ENCODE measurements at regions of chr7 and their contacts with region 1.

Region 1: GRCh38 chr7:135169141-135169960 is 1.2 kb downstream of the CYREN start:
- DNase-seq: peak in 2 of 4 donors; percentile 38 to 39
- ATAC-seq: no peak
- H3K4me3 ChIP-seq: peak overlapping the region in 1 of 2 donors; percentile 86
- H3K27ac ChIP-seq: peak overlapping the region; percentile 80 to 98 (median 96)
- H3K4me1 ChIP-seq: peaks cover 36% of the 10 kb centered on the region
- H3K27me3 ChIP-seq: no peaks in the 10 kb centered on the region
- CTCF ChIP-seq: peak in 4 of 7 experiments; percentile 17 to 34 (median 22)
- POLR2A ChIP-seq: no peak

Region 2: DNA sequence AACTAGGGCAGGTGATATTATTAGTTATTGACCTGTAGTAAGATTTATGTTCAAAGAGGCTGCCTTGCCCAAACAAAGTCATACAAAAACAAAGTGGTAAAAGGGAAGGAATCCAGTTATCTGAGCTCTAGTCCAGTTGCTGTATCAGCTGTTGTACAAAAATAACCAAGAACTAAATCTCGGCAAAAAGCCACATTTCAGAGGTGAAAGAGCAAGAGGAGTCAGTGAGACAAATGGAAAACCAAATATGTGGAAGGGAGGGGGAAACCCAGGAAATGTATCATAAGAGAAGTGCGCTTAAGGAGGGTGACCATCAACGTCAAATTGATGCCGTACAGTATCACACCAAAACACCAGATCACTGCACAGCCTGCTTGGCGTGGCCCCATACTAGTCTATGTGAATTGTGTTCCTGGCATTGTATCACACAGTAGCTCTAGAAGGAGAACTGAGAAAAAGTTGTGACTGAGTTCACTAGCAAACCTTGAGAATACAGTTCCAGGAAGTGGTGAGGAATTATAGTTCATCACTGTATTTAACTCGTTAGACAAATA is 176.6 kb before region 1 on chr7:
- intact Hi-C with region 1: loop called (anchors 10 kb)
- DNase-seq: peak in 1 of 4 donors; percentile 16
- ATAC-seq: peak; percentile 34
- H3K4me3 ChIP-seq: no peak overlapping the region
- H3K27ac ChIP-seq: peak overlapping the region; percentile 21 to 70 (median 64)
- H3K4me1 ChIP-seq: peaks cover 69% of the 10 kb centered on the region
- H3K27me3 ChIP-seq: no peaks in the 10 kb centered on the region
- CTCF ChIP-seq: no peak
- POLR2A ChIP-seq: no peak

Region 3: GRCh38 chr7:135320277-135320676 is 150.9 kb after region 1 on chr7:
- intact Hi-C with region 1: no loop called
- DNase-seq: peak; percentile 79 to 90 (median 82)
- ATAC-seq: peak; percentile 72
- H3K4me3 ChIP-seq: no peak overlapping the region
- H3K27ac ChIP-seq: peak overlapping the region in 1 of 4 donors; percentile 52
- H3K4me1 ChIP-seq: peaks cover 7% of the 10 kb centered on the region
- H3K27me3 ChIP-seq: no peaks in the 10 kb centered on the region
- CTCF ChIP-seq: no peak
- POLR2A ChIP-seq: no peak

Measured in body of pancreas (tissue), 4 donors.